AG04450 (cell line): ENCODE measurements at regions of chr7 and their contacts with region 1.

Region 1: GRCh38 chr7:25098096-25099046 is 26.7 kb downstream of the CYCS start:
- DNase-seq: peak; percentile 39
- H3K4me3 ChIP-seq: no peak overlapping the region
- H3K27ac ChIP-seq: no peak overlapping the region
- H3K27me3 ChIP-seq: peaks cover 3% of the 10 kb centered on the region
- CTCF ChIP-seq: peak; percentile 93

Region 2: DNA sequence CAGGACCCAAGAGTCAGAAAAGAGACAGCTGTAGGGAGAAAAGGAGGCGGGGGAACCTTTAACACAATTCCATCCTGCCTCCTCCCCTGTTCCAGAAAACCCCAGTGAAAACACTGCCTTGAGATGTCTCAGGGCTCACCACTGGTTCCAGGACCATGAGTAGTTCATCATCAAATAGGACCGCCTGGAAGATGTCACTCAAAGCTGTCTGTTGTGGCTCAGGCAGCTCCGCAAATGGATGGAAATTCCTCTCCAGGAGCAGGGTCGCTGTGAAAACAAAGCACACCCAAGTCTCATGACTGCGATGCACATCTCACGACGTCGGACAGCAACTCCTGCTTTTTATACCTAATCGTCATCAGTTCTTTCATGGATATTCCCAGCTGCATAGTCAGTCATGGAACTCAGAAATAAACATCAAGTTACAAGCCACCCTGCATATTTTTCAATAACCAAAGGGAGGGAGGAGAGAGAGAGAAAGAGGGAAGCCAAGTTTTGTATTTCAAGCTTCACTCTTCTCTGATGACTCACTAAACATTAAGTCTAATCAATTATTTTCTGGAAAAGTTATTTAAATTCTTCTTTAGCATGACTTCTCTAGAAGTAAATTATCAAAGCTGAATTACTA is 390.3 kb before region 1 on chr7:
- CTCF ChIA-PET with region 1: interaction called, 15 read pairs
- POLR2A ChIA-PET with region 1: no interaction called
- DNase-seq: peak; percentile 54
- H3K4me3 ChIP-seq: no peak overlapping the region
- H3K27ac ChIP-seq: peak overlapping the region; percentile 87
- H3K27me3 ChIP-seq: no peaks in the 10 kb centered on the region
- CTCF ChIP-seq: no peak

Region 3: DNA sequence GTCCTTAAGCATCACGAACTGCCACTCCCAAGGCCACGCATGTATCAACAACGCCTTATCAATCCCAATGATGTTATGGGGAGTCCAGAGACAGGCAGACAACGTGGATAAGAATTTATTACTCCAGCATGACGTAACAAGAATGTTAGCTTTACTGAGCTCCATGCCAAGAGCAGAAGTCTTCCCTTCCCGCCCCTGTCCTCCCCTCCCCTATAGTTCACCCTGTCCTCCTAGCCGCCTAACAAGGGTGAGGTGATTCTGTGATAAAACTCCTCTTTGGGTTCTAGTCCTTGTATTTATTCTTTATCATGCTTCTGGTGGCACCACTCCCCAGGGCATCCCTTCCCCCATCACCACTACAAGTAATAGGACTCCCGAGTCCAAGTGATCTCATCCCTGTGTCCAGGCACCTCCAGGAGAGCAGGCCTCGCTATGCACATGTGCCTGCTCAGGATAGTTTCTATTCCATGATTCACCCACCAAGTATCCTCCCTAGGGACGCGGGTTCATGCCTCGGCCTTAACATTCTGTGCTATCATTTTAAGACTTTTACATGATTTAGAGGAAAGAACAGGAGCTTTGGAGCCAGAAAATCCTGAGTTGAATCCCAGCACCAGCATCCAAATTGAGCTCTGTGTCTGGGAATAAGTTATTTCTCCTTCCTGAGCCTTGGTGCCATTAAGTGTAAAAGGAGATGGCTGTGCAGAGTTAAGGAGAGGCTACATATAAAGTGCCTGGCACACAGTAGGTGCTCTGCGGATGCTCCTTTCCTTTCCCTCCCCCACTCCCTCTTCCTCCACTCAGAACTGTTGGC is 356.5 kb before region 1 on chr7:
- CTCF ChIA-PET with region 1: interaction called, 10 read pairs
- POLR2A ChIA-PET with region 1: no interaction called
- DNase-seq: peak; percentile 80
- H3K4me3 ChIP-seq: no peak overlapping the region
- H3K27ac ChIP-seq: peak overlapping the region; percentile 90
- H3K27me3 ChIP-seq: no peaks in the 10 kb centered on the region
- CTCF ChIP-seq: no peak

Region 4: DNA sequence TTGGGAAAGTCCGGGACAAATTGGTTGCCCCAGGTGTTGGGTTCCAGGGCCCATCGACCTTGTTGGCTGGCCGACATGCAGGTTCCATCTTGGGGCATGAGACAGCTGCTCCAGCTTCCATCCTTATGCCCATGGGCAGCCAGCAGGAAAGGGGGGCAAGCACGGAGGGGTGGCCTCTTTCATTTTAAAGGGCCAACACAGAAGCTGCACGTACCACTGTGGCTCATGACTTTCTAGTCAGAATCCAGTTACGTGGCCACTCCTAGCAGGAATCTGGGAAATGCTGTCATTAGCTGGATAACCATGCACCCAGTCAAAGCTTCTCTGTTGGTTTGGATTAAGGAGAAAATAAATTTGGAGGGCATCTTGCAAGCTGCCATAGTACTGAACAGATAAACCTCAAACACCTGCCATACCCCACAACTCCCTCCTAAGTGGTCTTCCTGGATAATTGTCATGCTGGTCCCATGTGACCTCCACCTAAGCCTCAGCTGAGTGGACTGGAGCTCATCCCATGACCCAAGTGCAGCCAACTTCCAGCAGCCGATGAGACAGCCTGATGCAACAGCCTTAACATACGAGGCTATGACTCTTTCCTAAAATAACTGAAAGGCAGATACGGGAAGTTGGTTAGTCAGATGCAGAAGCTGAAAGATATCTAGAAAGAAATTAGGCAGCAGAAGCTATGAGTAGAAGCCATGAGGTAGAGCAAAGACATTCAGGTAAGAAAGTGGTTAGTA is 319.7 kb before region 1 on chr7:
- CTCF ChIA-PET with region 1: interaction called, 14 read pairs
- POLR2A ChIA-PET with region 1: no interaction called
- DNase-seq: no peak
- H3K4me3 ChIP-seq: no peak overlapping the region
- H3K27ac ChIP-seq: peak overlapping the region; percentile 78
- H3K27me3 ChIP-seq: no peaks in the 10 kb centered on the region
- CTCF ChIP-seq: no peak

Region 5: DNA sequence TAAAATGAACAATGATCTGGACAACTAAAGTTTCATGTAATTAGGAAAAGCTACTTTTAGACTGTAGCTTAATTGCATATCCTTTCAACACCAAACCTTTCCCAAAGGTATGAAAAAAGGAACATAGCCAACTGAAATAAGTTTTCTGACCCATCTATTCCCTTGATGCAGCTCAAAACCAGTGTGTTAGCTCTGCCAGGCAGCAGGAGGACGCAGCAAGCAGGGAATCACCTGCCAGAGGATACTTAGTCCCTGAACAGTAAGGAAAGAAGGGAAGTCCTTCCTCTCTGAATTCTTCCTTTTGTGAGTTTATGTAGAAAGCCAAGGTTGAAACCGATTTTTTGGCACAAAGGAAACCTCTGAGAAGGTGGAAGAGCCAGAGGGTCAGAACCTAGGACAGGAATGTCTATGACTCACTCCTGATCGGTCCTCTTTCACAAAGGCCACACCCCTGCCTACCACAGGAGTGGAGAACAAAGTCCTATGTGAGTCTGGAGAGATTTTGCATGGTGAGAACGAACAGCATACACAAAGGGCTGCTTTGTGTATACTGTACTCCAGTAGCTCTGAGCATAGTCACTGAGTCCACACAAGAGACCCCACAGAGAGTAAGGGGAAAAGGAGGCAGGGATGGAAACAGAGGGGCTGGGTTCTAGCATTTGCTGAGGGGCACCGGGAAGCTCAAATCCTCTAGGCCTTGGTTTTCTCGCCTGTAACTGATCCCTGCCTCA is 272.3 kb before region 1 on chr7:
- CTCF ChIA-PET with region 1: interaction called, 93 read pairs
- POLR2A ChIA-PET with region 1: interaction called, 3 read pairs
- DNase-seq: no peak
- H3K4me3 ChIP-seq: no peak overlapping the region
- H3K27ac ChIP-seq: peak overlapping the region; percentile 34
- H3K27me3 ChIP-seq: no peaks in the 10 kb centered on the region
- CTCF ChIP-seq: no peak

Region 6: GRCh38 chr7:25069900-25070443 is 28.4 kb before region 1 on chr7:
- CTCF ChIA-PET with region 1: interaction called, 20 read pairs
- POLR2A ChIA-PET with region 1: no interaction called
- DNase-seq: peak; percentile 56
- H3K4me3 ChIP-seq: no peak overlapping the region
- H3K27ac ChIP-seq: no peak overlapping the region
- H3K27me3 ChIP-seq: no peaks in the 10 kb centered on the region
- CTCF ChIP-seq: peak; percentile 87

Region 7: GRCh38 chr7:25148772-25149575 is 50.6 kb after region 1 on chr7:
- CTCF ChIA-PET with region 1: interaction called, 13 read pairs
- POLR2A ChIA-PET with region 1: no interaction called
- DNase-seq: no peak
- H3K4me3 ChIP-seq: no peak overlapping the region
- H3K27ac ChIP-seq: no peak overlapping the region
- H3K27me3 ChIP-seq: no peaks in the 10 kb centered on the region
- CTCF ChIP-seq: no peak